Posterior vena cava (tissue), 2 donors: ENCODE measurements at regions of chr9 and their contacts with region 1.

Region 1: GRCh38 chr9:129737479-129738274 is 15.2 kb downstream of the PTGES start:
- DNase-seq: peak; percentile 96

Region 2: GRCh38 chr9:129712634-129713401 is 24.9 kb before region 1 on chr9:
- intact Hi-C with region 1: loop called in 1 of 2 experiments (anchors 1 kb)
- DNase-seq: no peak

Region 3: GRCh38 chr9:129773262-129774048 is 35.8 kb after region 1 on chr9:
- intact Hi-C with region 1: no loop called
- DNase-seq: no peak

Region 4: DNA sequence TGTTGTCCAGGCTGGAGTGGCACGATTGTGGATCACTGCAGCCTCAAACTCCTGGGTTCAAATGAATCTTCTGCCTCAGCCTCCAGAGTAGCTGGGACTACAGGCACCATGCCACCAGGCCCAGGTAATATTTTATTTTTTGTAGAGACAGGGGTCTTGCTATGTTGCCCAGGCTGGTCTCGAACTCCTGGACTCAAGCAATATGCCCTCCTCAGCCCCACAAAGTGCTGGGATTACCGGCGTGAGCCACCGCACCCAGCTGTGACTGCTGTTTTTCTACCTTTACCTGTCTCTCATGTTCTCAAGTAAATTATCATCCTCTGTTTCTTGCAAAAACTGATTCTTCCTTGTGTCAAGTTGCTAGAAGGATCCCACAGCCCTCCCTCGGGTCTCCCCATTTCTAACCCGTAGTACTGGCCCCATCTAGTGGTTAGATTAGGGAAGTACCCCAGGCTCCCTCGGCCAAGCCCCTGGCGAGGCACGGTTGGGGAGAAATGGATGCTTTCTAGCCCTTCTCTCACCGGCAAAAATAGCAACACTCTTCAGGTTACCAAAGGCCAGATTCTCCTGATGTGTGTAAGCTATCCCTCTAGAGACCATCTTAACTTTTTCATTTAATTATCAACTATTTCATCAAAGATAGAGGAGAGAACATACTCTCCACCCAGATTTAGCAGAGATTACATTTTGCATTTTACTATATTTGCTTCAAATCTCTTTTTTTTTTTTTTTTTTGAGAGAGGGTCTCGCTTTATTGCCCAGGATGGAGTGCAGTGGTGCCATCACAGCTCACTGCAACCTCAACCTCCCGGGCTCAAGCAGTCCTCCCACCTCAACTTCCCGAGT is 46.1 kb after region 1 on chr9:
- intact Hi-C with region 1: loop called (anchors 5 kb)
- DNase-seq: peak; percentile 87